CD8-positive, alpha-beta T cell (primary cell): ENCODE measurements at regions of chr15 and their contacts with region 1.

Region 1: DNA sequence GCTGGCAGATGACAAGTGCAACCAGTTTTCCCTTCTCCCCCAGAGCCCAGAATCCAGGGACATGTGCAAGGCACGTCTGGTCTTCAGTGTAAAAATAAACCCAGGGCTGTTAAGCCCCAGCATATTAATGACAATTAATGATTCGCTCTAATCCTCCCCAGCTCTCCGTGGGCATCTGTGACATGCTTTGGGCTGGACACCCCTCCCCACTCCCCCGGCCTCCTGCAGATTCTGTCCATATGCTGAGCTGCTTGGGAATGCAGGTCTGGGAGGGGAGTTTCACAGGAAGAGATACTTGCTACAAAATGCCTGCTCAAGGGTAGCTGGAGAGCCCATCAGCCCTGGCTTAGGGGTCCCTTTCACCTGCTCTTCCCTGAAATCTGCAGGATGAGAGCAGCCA is 43.0 kb upstream of the NTRK3 start:
- DNase-seq: no peak
- ATAC-seq: no peak
- H3K4me3 ChIP-seq: no peak overlapping the region
- H3K4me3 Mint-ChIP-seq: no peak overlapping the region
- H3K27ac ChIP-seq: no peak overlapping the region
- H3K27ac Mint-ChIP-seq: no peak overlapping the region
- H3K4me1 ChIP-seq: no peaks in the 10 kb centered on the region
- H3K4me1 Mint-ChIP-seq: no peaks in the 10 kb centered on the region
- H3K27me3 ChIP-seq: peaks cover 0 to 3% of the 10 kb centered on the region in 2 experiments
- H3K27me3 Mint-ChIP-seq: peaks cover 6% of the 10 kb centered on the region
- CTCF ChIP-seq: no peak

Region 2: DNA sequence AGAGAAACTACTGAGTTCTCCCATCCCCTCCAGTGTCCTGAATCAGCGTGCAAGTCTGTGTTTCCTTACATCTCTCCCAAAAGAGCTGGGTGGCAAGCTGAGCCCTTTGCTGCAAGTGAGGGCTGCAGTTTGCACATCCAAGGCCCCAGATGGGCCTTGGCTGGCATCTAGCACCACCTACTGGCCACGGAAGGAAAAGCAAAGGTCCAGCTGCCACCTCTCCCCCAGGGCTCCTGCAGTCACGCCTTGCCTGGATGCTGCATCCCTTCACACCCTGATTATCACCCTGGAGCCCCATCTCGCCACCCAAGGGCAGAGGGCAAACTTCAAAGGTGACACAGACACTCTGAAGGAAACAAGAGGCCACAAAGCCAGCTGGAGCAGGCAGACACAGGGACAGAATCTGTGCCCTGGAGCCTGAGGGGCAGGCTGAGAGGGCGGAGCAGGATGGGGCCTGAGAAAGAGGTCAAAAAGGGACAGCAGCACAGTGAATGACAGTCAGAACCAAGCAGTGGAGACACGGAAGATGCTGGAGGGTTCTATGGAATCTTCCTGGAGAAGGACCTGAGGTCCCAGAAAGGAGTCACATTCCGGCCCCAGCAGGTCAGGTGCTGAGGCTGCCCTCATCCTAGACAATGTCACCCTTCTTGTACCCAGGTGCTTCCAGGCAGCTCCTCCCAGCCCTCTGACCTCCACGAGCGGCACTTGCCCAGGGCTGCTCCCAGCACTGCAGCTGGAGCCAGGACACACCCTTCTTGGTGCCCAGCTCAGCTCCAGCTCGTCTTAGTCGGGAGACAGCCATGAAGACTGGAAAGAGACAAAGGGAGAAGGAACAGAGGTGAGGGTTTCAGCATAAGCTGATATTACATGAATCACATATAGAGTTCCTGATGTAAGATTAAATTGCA is 24.7 kb before region 1 on chr15:
- CTCF ChIA-PET with region 1: interaction called, 13 read pairs
- POLR2A ChIA-PET with region 1: no interaction called
- intact Hi-C with region 1: no loop called
- DNase-seq: peak; percentile 11 to 61 (median 44)
- ATAC-seq: no peak
- H3K4me3 ChIP-seq: no peak overlapping the region
- H3K4me3 Mint-ChIP-seq: no peak overlapping the region
- H3K27ac ChIP-seq: no peak overlapping the region
- H3K27ac Mint-ChIP-seq: no peak overlapping the region
- H3K4me1 ChIP-seq: no peaks in the 10 kb centered on the region
- H3K4me1 Mint-ChIP-seq: no peaks in the 10 kb centered on the region
- H3K27me3 ChIP-seq: no peaks in the 10 kb centered on the region
- H3K27me3 Mint-ChIP-seq: peaks cover 15% of the 10 kb centered on the region
- CTCF ChIP-seq: peak; percentile 63

Region 3: GRCh38 chr15:89101302-89102191 is 802.0 kb after region 1 on chr15:
- CTCF ChIA-PET with region 1: no interaction called
- POLR2A ChIA-PET with region 1: no interaction called
- intact Hi-C with region 1: no loop called
- DNase-seq: peak in 1 of 9 experiments; percentile 9
- ATAC-seq: no peak
- H3K4me3 ChIP-seq: no peak overlapping the region
- H3K4me3 Mint-ChIP-seq: no peak overlapping the region
- H3K27ac ChIP-seq: peak overlapping the region in 1 of 2 experiments; percentile 20
- H3K27ac Mint-ChIP-seq: no peak overlapping the region
- H3K4me1 ChIP-seq: no peaks in the 10 kb centered on the region
- H3K4me1 Mint-ChIP-seq: peaks cover 18% of the 10 kb centered on the region
- H3K27me3 ChIP-seq: no peaks in the 10 kb centered on the region
- H3K27me3 Mint-ChIP-seq: no peaks in the 10 kb centered on the region
- CTCF ChIP-seq: no peak